ENCODE measurements at regions of chr17 and their contacts with region 1.

Region 1: GRCh38 chr17:48024937-48025906 is 12.4 kb downstream of the COPZ2 start:
- DNase-seq: peak; percentile 91 to 94
- H3K4me3 ChIP-seq: peak overlapping the region; percentile 68
- H3K27ac ChIP-seq: peak overlapping the region; percentile 84
- H3K4me1 ChIP-seq: peaks cover 27% of the 10 kb centered on the region
- H3K27me3 ChIP-seq: no peaks in the 10 kb centered on the region
- CTCF ChIP-seq: peak; percentile 87

Region 2: GRCh38 chr17:47895856-47896671 is 129.2 kb before region 1 on chr17 and contains the start of gene SP2:
- CTCF ChIA-PET with region 1: no interaction called
- POLR2A ChIA-PET with region 1: no interaction called
- intact Hi-C with region 1: loop called (anchors 1 kb)
- DNase-seq: peak; percentile 99 to 100
- H3K4me3 ChIP-seq: peak within 1 kb of the TSS; percentile 93
- H3K27ac ChIP-seq: peak within 1 kb of the TSS; percentile 74
- H3K4me1 ChIP-seq: peaks cover 32% of the 10 kb centered on the region
- H3K27me3 ChIP-seq: no peaks in the 10 kb centered on the region
- CTCF ChIP-seq: peak; percentile 27; the same call in 1 of the 2 replicates
- total RNA-seq, gene SP2: 13.5 and 18.0 TPM in 2 replicates

Region 3: DNA sequence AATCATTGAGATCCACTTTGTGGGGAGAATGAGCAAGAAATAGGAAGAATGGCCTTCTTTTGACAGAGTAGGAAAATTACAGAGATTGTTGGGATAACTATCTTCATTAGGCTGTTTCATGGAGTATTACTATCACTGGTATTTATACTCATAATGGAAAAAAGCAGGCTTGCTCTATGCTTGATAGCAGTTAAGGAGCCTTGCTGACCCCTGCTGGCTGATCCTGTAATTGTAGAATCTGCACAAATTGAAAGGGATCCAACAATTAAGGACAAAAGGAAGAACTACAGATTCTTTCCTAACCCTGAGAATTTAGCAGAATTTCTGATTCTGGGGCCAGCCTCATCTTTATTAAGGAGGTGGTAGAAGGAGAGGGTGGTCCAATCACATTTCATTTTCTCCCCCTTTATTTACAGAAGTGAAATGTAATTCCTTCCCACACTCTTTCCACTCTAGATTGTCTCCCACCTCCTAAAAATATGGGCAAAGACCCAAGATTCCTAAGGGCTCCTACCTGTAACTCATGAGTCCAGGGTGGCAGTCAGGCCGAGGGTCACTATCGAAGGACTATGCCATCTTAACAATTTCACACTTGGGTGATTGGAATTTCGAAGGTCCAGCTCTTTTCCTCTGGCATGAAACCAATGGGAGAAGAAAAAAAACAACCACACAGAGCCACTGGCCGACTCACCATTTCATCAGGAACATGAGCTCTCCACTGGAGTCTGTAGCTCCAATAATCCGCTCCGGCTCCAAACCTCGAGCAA is 49.3 kb after region 1 on chr17:
- CTCF ChIA-PET with region 1: interaction called, 4 read pairs
- POLR2A ChIA-PET with region 1: no interaction called
- intact Hi-C with region 1: loop called (anchors 1 kb)
- DNase-seq: peak; percentile 62 to 71
- H3K4me3 ChIP-seq: no peak overlapping the region
- H3K27ac ChIP-seq: no peak overlapping the region
- H3K4me1 ChIP-seq: no peaks in the 10 kb centered on the region
- H3K27me3 ChIP-seq: no peaks in the 10 kb centered on the region
- CTCF ChIP-seq: peak; percentile 94

Region 4: GRCh38 chr17:48198950-48199541 is 173.8 kb after region 1 on chr17:
- CTCF ChIA-PET with region 1: no interaction called
- POLR2A ChIA-PET with region 1: no interaction called
- intact Hi-C with region 1: loop called (anchors 5 kb)
- DNase-seq: no peak
- H3K4me3 ChIP-seq: no peak overlapping the region
- H3K27ac ChIP-seq: no peak overlapping the region
- H3K4me1 ChIP-seq: peaks cover 7% of the 10 kb centered on the region; the same call in 1 of the 2 replicates
- H3K27me3 ChIP-seq: no peaks in the 10 kb centered on the region
- CTCF ChIP-seq: no peak

Region 5: GRCh38 chr17:48335858-48336500 is 310.8 kb after region 1 on chr17:
- CTCF ChIA-PET with region 1: interaction called, 4 read pairs
- POLR2A ChIA-PET with region 1: no interaction called
- intact Hi-C with region 1: loop called (anchors 10 kb)
- DNase-seq: peak in 1 of 2 experiments; percentile 49
- H3K4me3 ChIP-seq: no peak overlapping the region
- H3K27ac ChIP-seq: no peak overlapping the region
- H3K4me1 ChIP-seq: peaks cover 28% of the 10 kb centered on the region
- H3K27me3 ChIP-seq: no peaks in the 10 kb centered on the region
- CTCF ChIP-seq: peak; percentile 93

Region 6: DNA sequence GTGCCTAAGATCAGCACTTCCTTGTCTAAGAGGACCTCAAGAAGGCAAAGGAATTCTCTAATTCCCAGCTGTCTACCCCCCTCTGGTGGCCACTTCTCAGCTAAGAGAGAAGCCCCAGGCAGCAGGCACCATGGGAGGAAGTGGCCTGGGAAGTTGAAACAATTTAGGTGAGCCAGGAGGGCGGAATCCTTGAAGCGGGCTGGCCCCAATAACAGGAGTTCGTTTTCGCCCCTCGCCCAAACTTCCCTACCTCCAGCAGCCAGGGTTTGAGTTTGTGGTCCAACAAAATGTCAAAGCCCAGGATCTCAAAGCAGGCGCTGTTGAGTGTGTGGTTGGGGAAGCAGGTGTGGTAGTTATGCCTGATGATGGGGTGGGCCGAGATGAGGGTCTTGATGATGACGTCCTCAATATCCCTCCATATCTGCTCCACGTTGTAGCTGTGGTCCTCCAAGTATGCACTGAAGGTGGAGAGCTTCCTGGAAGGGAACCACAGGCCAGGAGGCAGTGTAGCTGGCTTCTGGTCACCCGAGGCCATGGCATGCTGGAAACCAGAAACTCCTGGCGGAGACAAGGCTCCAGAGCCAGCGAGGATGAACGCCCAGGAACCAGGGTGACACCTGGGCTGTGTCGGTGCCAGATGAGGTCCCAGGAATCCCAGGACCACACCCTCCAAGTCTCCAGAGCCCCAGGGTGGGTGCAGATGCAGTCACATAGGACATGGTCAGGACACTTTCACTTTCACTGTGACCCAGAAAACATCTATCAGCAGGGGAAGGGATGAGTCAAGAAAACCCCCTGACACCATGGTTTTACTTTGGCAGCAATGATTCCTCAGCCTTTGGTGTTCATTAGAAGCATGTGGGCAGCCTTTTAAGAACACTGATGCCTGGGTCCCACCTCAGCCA is 766.2 kb after region 1 on chr17:
- CTCF ChIA-PET with region 1: no interaction called
- POLR2A ChIA-PET with region 1: no interaction called
- intact Hi-C with region 1: loop called (anchors 5 kb)
- DNase-seq: peak; percentile 70 to 84
- H3K4me3 ChIP-seq: no peak overlapping the region
- H3K27ac ChIP-seq: no peak overlapping the region
- H3K4me1 ChIP-seq: no peaks in the 10 kb centered on the region
- H3K27me3 ChIP-seq: peaks cover 18% of the 10 kb centered on the region; the same call in 1 of the 2 replicates
- CTCF ChIP-seq: peak; percentile 92

Measured in PC-9 (cell line).